Naive thymus-derived CD4-positive, alpha-beta T cell (primary cell): ENCODE measurements at regions of chr9 and their contacts with region 1.

Region 1: DNA sequence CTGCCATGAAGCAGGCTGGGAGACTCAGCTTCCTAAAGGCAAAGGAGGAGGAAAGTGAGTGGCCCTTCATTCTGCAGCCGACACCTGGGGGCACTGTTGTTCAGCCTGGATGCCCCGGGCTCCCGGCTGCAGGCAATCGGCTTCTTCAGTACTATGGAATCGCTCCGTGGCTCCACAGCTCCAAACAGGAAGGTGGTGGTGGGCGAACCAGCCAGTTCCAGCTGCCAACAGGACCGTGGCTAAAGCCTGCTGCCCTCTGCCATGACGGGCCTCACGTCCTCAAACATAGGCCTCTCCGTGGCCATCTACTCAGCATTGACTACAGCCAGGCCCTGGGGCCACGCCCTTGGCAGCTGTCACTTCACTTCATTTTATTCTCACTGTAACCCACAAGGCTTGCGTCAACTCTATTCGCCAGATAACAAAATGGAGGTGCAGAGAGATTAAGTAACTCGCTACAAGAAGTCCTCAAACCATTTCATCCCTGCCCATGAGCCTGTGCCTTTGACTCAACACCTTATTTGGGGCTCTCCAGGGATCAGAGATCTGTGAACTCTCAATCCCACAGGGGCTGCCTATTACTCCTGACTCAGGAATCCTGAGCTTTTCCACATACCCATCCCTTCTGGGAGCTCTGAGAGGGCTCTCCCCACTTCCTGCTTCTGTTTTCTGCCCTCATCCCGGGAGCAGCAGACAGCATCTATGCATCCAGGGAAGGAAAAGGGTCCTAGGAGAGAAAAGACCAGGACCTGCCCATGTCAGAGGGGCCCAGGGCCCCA is 38.0 kb downstream of the PAX5 start:
- DNase-seq: peak in 8 of 9 donors; percentile 14 to 60 (median 52)
- ATAC-seq: peak; percentile 64
- H3K4me3 ChIP-seq: no peak overlapping the region
- H3K4me3 Mint-ChIP-seq: peak overlapping the region in 9 of 10 donors; percentile 35 to 78 (median 62)
- H3K27ac ChIP-seq: no peak overlapping the region
- H3K27ac Mint-ChIP-seq: no peak overlapping the region
- H3K4me1 ChIP-seq: no peaks in the 10 kb centered on the region
- H3K4me1 Mint-ChIP-seq: peaks cover 0 to 7% (median 2%) of the 10 kb centered on the region in 7 donors
- H3K27me3 ChIP-seq: no peaks in the 10 kb centered on the region
- H3K27me3 Mint-ChIP-seq: peaks cover 37 to 47% (median 43%) of the 10 kb centered on the region in 5 donors

Region 2: DNA sequence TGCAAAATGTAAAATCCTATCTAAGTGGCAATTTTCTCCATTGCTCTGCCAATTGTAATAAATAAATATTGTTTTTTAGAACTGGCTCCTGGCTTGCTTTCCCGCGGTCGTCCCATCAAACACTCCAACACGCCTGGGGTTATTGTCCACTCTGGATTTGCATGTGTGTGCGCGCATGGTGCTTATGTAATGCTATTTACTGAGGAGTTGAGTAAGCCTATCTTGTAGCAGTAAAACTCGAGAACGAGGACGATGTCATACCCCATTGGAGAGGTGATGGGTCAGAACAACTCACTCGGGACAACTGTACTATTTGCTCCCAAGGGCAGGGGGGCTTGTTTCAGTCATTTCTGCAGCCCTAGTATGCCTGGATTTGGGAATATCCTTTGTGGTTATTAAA is 183.0 kb before region 1 on chr9:
- CTCF ChIA-PET with region 1: no interaction called
- POLR2A ChIA-PET with region 1: no interaction called
- intact Hi-C with region 1: no loop called
- DNase-seq: no peak
- ATAC-seq: no peak
- H3K4me3 ChIP-seq: no peak overlapping the region
- H3K4me3 Mint-ChIP-seq: no peak overlapping the region
- H3K27ac ChIP-seq: no peak overlapping the region
- H3K27ac Mint-ChIP-seq: no peak overlapping the region
- H3K4me1 ChIP-seq: no peaks in the 10 kb centered on the region
- H3K4me1 Mint-ChIP-seq: peaks cover 0 to 4% (median 0%) of the 10 kb centered on the region in 7 donors
- H3K27me3 ChIP-seq: no peaks in the 10 kb centered on the region
- H3K27me3 Mint-ChIP-seq: peaks cover 14 to 34% (median 22%) of the 10 kb centered on the region in 5 donors

Region 3: DNA sequence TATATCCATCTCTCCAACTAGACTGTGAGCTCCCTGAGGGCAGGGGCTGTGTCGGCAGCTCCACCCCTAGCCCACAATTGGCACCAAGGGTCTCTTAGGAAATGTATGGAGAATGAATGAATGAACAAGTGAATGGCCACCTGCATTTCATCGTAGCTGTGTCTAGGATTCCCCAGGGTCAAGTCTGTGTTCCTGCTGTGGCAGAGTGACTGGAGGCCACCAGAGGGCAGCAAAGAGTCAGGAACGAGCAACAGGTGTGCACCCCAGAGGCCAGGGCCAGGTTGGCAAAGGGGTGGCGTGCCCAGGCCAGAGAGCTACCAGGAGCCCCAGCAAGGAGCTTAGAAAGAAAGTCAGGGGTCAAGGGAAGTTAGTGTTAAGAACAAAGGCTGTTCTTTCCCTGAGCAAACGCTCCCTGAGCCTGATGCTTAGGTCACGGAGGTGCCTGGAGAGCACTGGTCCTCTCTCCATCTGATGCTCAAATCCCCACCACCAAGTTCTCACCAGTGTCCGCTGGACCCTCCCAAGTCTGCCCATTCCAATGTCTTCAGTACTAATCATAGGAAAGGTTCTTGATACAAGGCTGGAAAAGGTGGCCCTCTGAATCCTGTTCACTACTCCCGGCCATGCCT is 122.8 kb before region 1 on chr9:
- CTCF ChIA-PET with region 1: no interaction called
- POLR2A ChIA-PET with region 1: no interaction called
- intact Hi-C with region 1: loop called in 1 of 2 experiments (anchors 1 kb)
- DNase-seq: peak; percentile 37 to 71 (median 63)
- ATAC-seq: peak; percentile 78
- H3K4me3 ChIP-seq: no peak overlapping the region
- H3K4me3 Mint-ChIP-seq: no peak overlapping the region
- H3K27ac ChIP-seq: no peak overlapping the region
- H3K27ac Mint-ChIP-seq: peak overlapping the region in 1 of 9 donors; percentile 25
- H3K4me1 ChIP-seq: no peaks in the 10 kb centered on the region
- H3K4me1 Mint-ChIP-seq: no peaks in the 10 kb centered on the region
- H3K27me3 ChIP-seq: no peaks in the 10 kb centered on the region
- H3K27me3 Mint-ChIP-seq: peaks cover 0 to 4% (median 0%) of the 10 kb centered on the region in 5 donors

Region 4: DNA sequence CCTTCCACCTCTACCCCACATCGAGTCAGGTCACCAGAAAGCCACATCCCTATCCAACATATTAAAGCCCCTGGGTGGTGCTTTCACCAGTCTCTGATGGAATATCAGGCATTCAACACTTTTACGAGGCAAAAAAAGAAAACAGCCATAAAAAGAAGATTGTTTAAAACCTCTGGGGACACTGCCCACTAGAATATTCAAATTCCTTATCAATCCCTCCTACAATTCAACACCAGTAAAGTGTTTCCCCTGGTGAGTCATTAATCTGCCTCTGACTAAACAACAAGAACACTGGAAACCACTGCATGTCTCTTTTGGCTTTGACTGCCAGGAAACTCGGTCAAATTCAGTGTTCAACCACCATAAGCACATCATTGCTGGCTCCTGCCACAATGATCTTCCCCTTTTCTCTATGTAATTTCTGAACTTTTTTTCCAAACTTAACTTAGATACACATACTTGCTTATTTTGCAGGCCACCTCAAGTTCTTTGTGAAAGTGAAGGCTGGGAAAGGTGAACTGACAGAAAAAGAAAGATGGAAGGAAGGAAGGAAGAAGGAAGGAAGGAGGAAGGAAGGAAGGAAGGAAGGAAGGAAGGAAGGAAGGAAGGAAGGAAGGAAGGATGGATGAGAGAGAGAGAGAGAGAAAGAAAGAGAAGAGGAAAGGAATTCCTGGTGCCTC is 67.3 kb before region 1 on chr9:
- CTCF ChIA-PET with region 1: no interaction called
- POLR2A ChIA-PET with region 1: no interaction called
- intact Hi-C with region 1: no loop called
- DNase-seq: no peak
- ATAC-seq: no peak
- H3K4me3 ChIP-seq: no peak overlapping the region
- H3K4me3 Mint-ChIP-seq: peak overlapping the region in 1 of 10 donors; percentile 64
- H3K27ac ChIP-seq: no peak overlapping the region
- H3K27ac Mint-ChIP-seq: peak overlapping the region in 1 of 9 donors; percentile 83
- H3K4me1 ChIP-seq: no peaks in the 10 kb centered on the region
- H3K4me1 Mint-ChIP-seq: peaks cover 0 to 35% (median 0%) of the 10 kb centered on the region in 7 donors
- H3K27me3 ChIP-seq: no peaks in the 10 kb centered on the region
- H3K27me3 Mint-ChIP-seq: peaks cover 0 to 21% (median 6%) of the 10 kb centered on the region in 5 donors

Region 5: GRCh38 chr9:36939655-36940499 is 56.2 kb before region 1 on chr9:
- CTCF ChIA-PET with region 1: no interaction called
- POLR2A ChIA-PET with region 1: no interaction called
- intact Hi-C with region 1: no loop called
- DNase-seq: peak in 1 of 9 donors; percentile 11
- ATAC-seq: no peak
- H3K4me3 ChIP-seq: no peak overlapping the region
- H3K4me3 Mint-ChIP-seq: no peak overlapping the region
- H3K27ac ChIP-seq: no peak overlapping the region
- H3K27ac Mint-ChIP-seq: no peak overlapping the region
- H3K4me1 ChIP-seq: no peaks in the 10 kb centered on the region
- H3K4me1 Mint-ChIP-seq: peaks cover 0 to 4% (median 0%) of the 10 kb centered on the region in 7 donors
- H3K27me3 ChIP-seq: no peaks in the 10 kb centered on the region
- H3K27me3 Mint-ChIP-seq: peaks cover 5 to 13% (median 6%) of the 10 kb centered on the region in 5 donors

Region 6: DNA sequence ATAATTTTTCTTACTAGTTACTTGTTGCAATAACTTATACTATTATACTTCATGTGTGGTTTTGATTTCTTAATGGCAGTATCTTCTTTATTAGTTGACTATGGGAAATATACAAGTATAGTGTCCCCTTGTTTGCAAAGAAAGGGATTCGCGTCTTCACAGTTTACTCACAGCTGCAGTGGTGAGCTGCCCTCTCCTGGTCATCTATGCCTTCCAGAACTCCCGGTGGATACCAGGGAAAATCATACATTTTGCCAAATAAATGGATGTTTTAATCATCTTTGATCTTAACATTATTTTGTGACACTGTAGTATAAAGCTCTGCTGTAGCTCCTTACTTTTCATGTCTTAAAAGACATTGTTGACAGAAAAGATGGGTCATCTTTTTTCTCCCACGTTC is 266.3 kb after region 1 on chr9:
- CTCF ChIA-PET with region 1: interaction called, 5 read pairs
- POLR2A ChIA-PET with region 1: no interaction called
- intact Hi-C with region 1: loop called in 1 of 2 experiments (anchors 1 kb)
- DNase-seq: peak in 1 of 9 donors; percentile 4
- ATAC-seq: no peak
- H3K4me3 ChIP-seq: no peak overlapping the region
- H3K4me3 Mint-ChIP-seq: no peak overlapping the region
- H3K27ac ChIP-seq: no peak overlapping the region
- H3K27ac Mint-ChIP-seq: no peak overlapping the region
- H3K4me1 ChIP-seq: no peaks in the 10 kb centered on the region
- H3K4me1 Mint-ChIP-seq: peaks cover 0 to 35% (median 17%) of the 10 kb centered on the region in 7 donors
- H3K27me3 ChIP-seq: no peaks in the 10 kb centered on the region
- H3K27me3 Mint-ChIP-seq: no peaks in the 10 kb centered on the region

Region 7: DNA sequence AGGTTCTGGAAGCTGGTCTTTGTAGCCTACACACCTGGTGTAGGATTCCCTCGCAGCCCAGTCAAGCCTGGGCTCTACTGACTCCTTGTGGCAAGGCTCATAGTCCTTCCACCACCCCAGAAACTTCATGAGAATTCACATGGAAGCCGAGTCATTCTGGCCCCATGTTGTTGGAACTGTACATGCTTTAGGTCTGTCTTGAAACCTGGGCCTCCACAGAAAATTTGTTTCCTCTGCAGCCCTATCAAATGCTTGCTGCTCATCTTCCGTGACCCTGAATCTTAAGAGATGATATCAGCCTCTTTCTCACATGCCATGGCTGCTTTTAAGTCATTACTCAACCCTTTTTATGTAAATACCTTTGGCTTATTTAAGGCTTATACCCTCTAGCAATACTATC is 313.0 kb after region 1 on chr9:
- CTCF ChIA-PET with region 1: no interaction called
- POLR2A ChIA-PET with region 1: no interaction called
- intact Hi-C with region 1: loop called (anchors 1 kb)
- DNase-seq: peak in 3 of 9 donors; percentile 12 to 19 (median 18)
- ATAC-seq: peak; percentile 41
- H3K4me3 ChIP-seq: no peak overlapping the region
- H3K4me3 Mint-ChIP-seq: no peak overlapping the region
- H3K27ac ChIP-seq: no peak overlapping the region
- H3K27ac Mint-ChIP-seq: no peak overlapping the region
- H3K4me1 ChIP-seq: no peaks in the 10 kb centered on the region
- H3K4me1 Mint-ChIP-seq: peaks cover 0 to 10% (median 0%) of the 10 kb centered on the region in 7 donors
- H3K27me3 ChIP-seq: no peaks in the 10 kb centered on the region
- H3K27me3 Mint-ChIP-seq: no peaks in the 10 kb centered on the region

Region 8: DNA sequence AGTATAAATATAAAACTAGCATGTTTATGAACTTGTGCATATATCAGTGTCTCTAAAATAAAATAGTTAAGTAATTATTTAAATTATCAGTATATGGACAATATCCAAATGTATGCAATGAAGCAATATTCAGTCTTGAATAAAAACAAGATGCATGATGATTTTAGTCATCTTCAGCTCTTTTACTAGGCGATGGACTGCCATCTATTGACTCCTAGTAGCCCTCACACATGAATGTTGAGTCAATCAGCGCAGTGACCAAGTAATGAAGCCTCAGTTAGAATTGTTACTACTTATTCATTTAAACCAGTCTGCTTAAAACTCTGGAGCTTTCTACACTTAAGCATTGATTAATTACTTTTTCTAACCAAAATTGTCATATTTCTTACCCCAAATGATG is 333.5 kb after region 1 on chr9:
- CTCF ChIA-PET with region 1: interaction called, 5 read pairs
- POLR2A ChIA-PET with region 1: no interaction called
- intact Hi-C with region 1: loop called (anchors 1 kb)
- DNase-seq: peak in 4 of 9 donors; percentile 3 to 16 (median 10)
- ATAC-seq: peak; percentile 27
- H3K4me3 ChIP-seq: no peak overlapping the region
- H3K4me3 Mint-ChIP-seq: no peak overlapping the region
- H3K27ac ChIP-seq: no peak overlapping the region
- H3K27ac Mint-ChIP-seq: no peak overlapping the region
- H3K4me1 ChIP-seq: no peaks in the 10 kb centered on the region
- H3K4me1 Mint-ChIP-seq: peaks cover 0 to 4% (median 0%) of the 10 kb centered on the region in 7 donors
- H3K27me3 ChIP-seq: no peaks in the 10 kb centered on the region
- H3K27me3 Mint-ChIP-seq: no peaks in the 10 kb centered on the region

Region 9: GRCh38 chr9:37364751-37365360 is 368.7 kb after region 1 on chr9:
- CTCF ChIA-PET with region 1: interaction called, 4 read pairs
- POLR2A ChIA-PET with region 1: no interaction called
- intact Hi-C with region 1: loop called (anchors 1 to 10 kb)
- DNase-seq: peak in 3 of 9 donors; percentile 3 to 18 (median 7)
- ATAC-seq: peak; percentile 54
- H3K4me3 ChIP-seq: no peak overlapping the region
- H3K4me3 Mint-ChIP-seq: no peak overlapping the region
- H3K27ac ChIP-seq: no peak overlapping the region
- H3K27ac Mint-ChIP-seq: no peak overlapping the region
- H3K4me1 ChIP-seq: no peaks in the 10 kb centered on the region
- H3K4me1 Mint-ChIP-seq: peaks cover 0 to 10% (median 0%) of the 10 kb centered on the region in 7 donors
- H3K27me3 ChIP-seq: no peaks in the 10 kb centered on the region
- H3K27me3 Mint-ChIP-seq: no peaks in the 10 kb centered on the region

Region 10: DNA sequence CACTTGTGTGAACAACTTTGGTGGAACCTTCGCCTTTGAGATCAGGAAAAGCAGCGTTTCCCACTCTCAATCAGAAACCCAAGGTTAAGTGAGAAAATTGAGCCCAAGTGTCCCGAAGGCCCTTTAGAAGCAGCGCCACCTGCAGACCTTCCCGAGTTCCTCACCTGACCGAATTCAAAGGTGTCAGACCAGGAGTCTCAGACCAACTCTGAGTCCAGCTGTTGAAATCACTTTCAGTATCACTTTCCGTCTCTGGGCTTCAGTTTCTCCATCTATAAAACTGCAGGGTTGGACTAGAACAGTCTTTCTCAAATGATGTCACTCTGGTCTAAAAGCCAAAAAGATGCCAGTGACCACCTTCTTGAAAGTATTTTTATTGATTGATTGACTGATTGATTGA is 394.6 kb after region 1 on chr9:
- CTCF ChIA-PET with region 1: no interaction called
- POLR2A ChIA-PET with region 1: no interaction called
- intact Hi-C with region 1: loop called (anchors 1 kb)
- DNase-seq: peak in 1 of 9 donors; percentile 19
- ATAC-seq: peak; percentile 24
- H3K4me3 ChIP-seq: no peak overlapping the region
- H3K4me3 Mint-ChIP-seq: no peak overlapping the region
- H3K27ac ChIP-seq: no peak overlapping the region
- H3K27ac Mint-ChIP-seq: no peak overlapping the region
- H3K4me1 ChIP-seq: no peaks in the 10 kb centered on the region
- H3K4me1 Mint-ChIP-seq: no peaks in the 10 kb centered on the region
- H3K27me3 ChIP-seq: no peaks in the 10 kb centered on the region
- H3K27me3 Mint-ChIP-seq: no peaks in the 10 kb centered on the region